ENCODE measurements at regions of chr14 and their contacts with region 1.

Region 1: GRCh38 chr14:93332853-93333630 is at the start of gene BTBD7:
- DNase-seq: peak; percentile 94
- ATAC-seq: peak; percentile 91
- H3K4me3 Mint-ChIP-seq: peak within 1 kb of the TSS; percentile 95
- H3K27ac Mint-ChIP-seq: peak within 1 kb of the TSS; percentile 90
- H3K4me1 Mint-ChIP-seq: peaks cover 40% of the 10 kb centered on the region
- H3K27me3 Mint-ChIP-seq: no peaks in the 10 kb centered on the region
- CTCF ChIP-seq: no peak
- total RNA-seq, gene BTBD7: 34.4 and 41.2 TPM in 2 replicates

Region 2: GRCh38 chr14:93184388-93185353 is 148.4 kb before region 1 on chr14 and contains the starts of genes LYSET and MOAP1:
- CTCF ChIA-PET with region 1: no interaction called
- POLR2A ChIA-PET with region 1: no interaction called
- intact Hi-C with region 1: loop called (anchors 1 kb)
- DNase-seq: peak; percentile 81
- ATAC-seq: peak; percentile 83
- H3K4me3 Mint-ChIP-seq: peak within 1 kb of the TSS; percentile 92
- H3K27ac Mint-ChIP-seq: peak within 1 kb of the TSS; percentile 93
- H3K4me1 Mint-ChIP-seq: peaks cover 24% of the 10 kb centered on the region
- H3K27me3 Mint-ChIP-seq: no peaks in the 10 kb centered on the region
- CTCF ChIP-seq: no peak
- total RNA-seq, gene LYSET: 17.6 and 19.3 TPM in 2 replicates
- total RNA-seq, gene MOAP1: 21.3 and 24.4 TPM in 2 replicates

Region 3: DNA sequence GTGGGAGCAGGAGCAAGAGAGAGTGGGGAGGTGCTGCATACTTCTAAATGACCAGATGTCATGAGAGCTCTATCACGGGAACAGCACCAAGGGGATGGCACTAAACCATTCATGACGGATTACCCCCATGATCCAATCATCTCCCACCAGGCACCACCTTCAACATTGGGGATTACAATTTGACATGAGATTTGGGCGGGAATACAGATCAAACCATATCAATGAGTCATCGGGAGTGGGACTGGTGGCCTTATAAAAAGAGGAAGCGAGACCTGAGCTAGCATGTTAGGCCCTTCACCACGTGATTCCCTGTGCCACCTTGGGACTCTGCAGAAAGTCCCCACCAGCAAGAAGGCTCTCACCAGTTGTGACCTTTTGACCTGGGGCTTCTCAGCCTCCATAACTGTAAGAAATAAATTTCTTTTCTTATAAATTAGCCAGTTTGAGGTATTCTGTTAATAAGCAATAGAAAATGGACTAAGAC is 42.7 kb after region 1 on chr14:
- CTCF ChIA-PET with region 1: no interaction called
- POLR2A ChIA-PET with region 1: interaction called, 5 read pairs
- intact Hi-C with region 1: loop called (anchors 1 kb)
- DNase-seq: peak; percentile 53
- ATAC-seq: peak; percentile 96
- H3K4me3 Mint-ChIP-seq: peak overlapping the region; percentile 57
- H3K27ac Mint-ChIP-seq: peak overlapping the region; percentile 92
- H3K4me1 Mint-ChIP-seq: peaks cover 55% of the 10 kb centered on the region
- H3K27me3 Mint-ChIP-seq: no peaks in the 10 kb centered on the region
- CTCF ChIP-seq: no peak

Region 4: GRCh38 chr14:93431036-93431670 is 98.1 kb after region 1 on chr14:
- CTCF ChIA-PET with region 1: no interaction called
- POLR2A ChIA-PET with region 1: no interaction called
- intact Hi-C with region 1: loop called (anchors 5 kb)
- DNase-seq: no peak
- ATAC-seq: no peak
- H3K4me3 Mint-ChIP-seq: no peak overlapping the region
- H3K27ac Mint-ChIP-seq: no peak overlapping the region
- H3K4me1 Mint-ChIP-seq: peaks cover 4% of the 10 kb centered on the region
- H3K27me3 Mint-ChIP-seq: peaks cover 40% of the 10 kb centered on the region
- CTCF ChIP-seq: no peak

Region 5: GRCh38 chr14:93533472-93534241 is 200.6 kb after region 1 on chr14:
- CTCF ChIA-PET with region 1: no interaction called
- POLR2A ChIA-PET with region 1: no interaction called
- intact Hi-C with region 1: loop called (anchors 5 kb)
- DNase-seq: no peak
- ATAC-seq: peak; percentile 79
- H3K4me3 Mint-ChIP-seq: peak overlapping the region; percentile 15
- H3K27ac Mint-ChIP-seq: no peak overlapping the region
- H3K4me1 Mint-ChIP-seq: peaks cover 30% of the 10 kb centered on the region
- H3K27me3 Mint-ChIP-seq: no peaks in the 10 kb centered on the region
- CTCF ChIP-seq: no peak

Region 6: DNA sequence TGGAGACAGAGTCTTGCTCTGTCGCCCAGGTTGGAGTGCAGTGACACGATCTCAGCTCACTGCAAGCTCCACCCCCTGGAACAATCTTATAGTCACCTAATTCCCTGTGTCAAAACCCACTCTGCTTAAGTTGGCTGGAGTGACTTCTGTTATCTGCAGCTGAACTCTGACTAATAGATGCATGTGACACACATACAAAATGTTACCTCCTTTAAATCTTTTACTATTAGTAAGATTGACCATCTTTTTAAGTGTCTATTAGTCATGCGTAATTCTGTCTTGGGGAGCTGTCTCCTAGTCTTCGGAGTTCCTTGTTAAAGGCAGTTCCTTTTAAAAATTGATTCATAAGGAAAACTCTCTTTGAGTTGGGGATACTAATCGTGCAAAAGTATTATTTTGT is 755.5 kb after region 1 on chr14:
- CTCF ChIA-PET with region 1: no interaction called
- POLR2A ChIA-PET with region 1: no interaction called
- intact Hi-C with region 1: no loop called
- DNase-seq: no peak
- ATAC-seq: no peak
- H3K4me3 Mint-ChIP-seq: no peak overlapping the region
- H3K27ac Mint-ChIP-seq: no peak overlapping the region
- H3K4me1 Mint-ChIP-seq: no peaks in the 10 kb centered on the region
- H3K27me3 Mint-ChIP-seq: no peaks in the 10 kb centered on the region
- CTCF ChIP-seq: no peak

Measured in activated B cell treated with CpG ODN at 0.5 μM for 24 hours (primary cell).